CD8-positive, alpha-beta T cell (primary cell): ENCODE measurements at regions of chr20 and their contacts with region 1.

Region 1: GRCh38 chr20:36754656-36755222 is 8.8 kb upstream of the NDRG3 start:
- DNase-seq: peak in 7 of 9 experiments; percentile 10 to 74 (median 41)
- ATAC-seq: peak; percentile 94
- H3K4me3 ChIP-seq: no peak overlapping the region
- H3K4me3 Mint-ChIP-seq: no peak overlapping the region
- H3K27ac ChIP-seq: no peak overlapping the region
- H3K27ac Mint-ChIP-seq: no peak overlapping the region
- H3K4me1 ChIP-seq: no peaks in the 10 kb centered on the region
- H3K4me1 Mint-ChIP-seq: no peaks in the 10 kb centered on the region
- H3K27me3 ChIP-seq: no peaks in the 10 kb centered on the region
- H3K27me3 Mint-ChIP-seq: no peaks in the 10 kb centered on the region
- CTCF ChIP-seq: peak; percentile 61

Region 2: GRCh38 chr20:36267581-36268381 is 487.0 kb before region 1 on chr20:
- CTCF ChIA-PET with region 1: no interaction called
- POLR2A ChIA-PET with region 1: no interaction called
- intact Hi-C with region 1: no loop called
- DNase-seq: no peak
- ATAC-seq: no peak
- H3K4me3 ChIP-seq: no peak overlapping the region
- H3K4me3 Mint-ChIP-seq: no peak overlapping the region
- H3K27ac ChIP-seq: no peak overlapping the region
- H3K27ac Mint-ChIP-seq: no peak overlapping the region
- H3K4me1 ChIP-seq: no peaks in the 10 kb centered on the region
- H3K4me1 Mint-ChIP-seq: no peaks in the 10 kb centered on the region
- H3K27me3 ChIP-seq: no peaks in the 10 kb centered on the region
- H3K27me3 Mint-ChIP-seq: no peaks in the 10 kb centered on the region
- CTCF ChIP-seq: no peak

Region 3: GRCh38 chr20:36506253-36506652 is 248.5 kb before region 1 on chr20:
- CTCF ChIA-PET with region 1: interaction called, 5 read pairs
- POLR2A ChIA-PET with region 1: no interaction called
- intact Hi-C with region 1: loop called (anchors 1 kb)
- DNase-seq: peak in 2 of 9 experiments; percentile 36 to 59
- ATAC-seq: peak; percentile 80
- H3K4me3 ChIP-seq: no peak overlapping the region
- H3K4me3 Mint-ChIP-seq: no peak overlapping the region
- H3K27ac ChIP-seq: no peak overlapping the region
- H3K27ac Mint-ChIP-seq: no peak overlapping the region
- H3K4me1 ChIP-seq: no peaks in the 10 kb centered on the region
- H3K4me1 Mint-ChIP-seq: peaks cover 8% of the 10 kb centered on the region
- H3K27me3 ChIP-seq: no peaks in the 10 kb centered on the region
- H3K27me3 Mint-ChIP-seq: no peaks in the 10 kb centered on the region
- CTCF ChIP-seq: peak; percentile 51

Region 4: GRCh38 chr20:36613974-36614373 is 140.8 kb before region 1 on chr20:
- CTCF ChIA-PET with region 1: interaction called, 25 read pairs
- POLR2A ChIA-PET with region 1: no interaction called
- intact Hi-C with region 1: loop called (anchors 1 kb)
- DNase-seq: no peak
- ATAC-seq: no peak
- H3K4me3 ChIP-seq: no peak overlapping the region
- H3K4me3 Mint-ChIP-seq: no peak overlapping the region
- H3K27ac ChIP-seq: no peak overlapping the region
- H3K27ac Mint-ChIP-seq: peak overlapping the region; percentile 55
- H3K4me1 ChIP-seq: no peaks in the 10 kb centered on the region
- H3K4me1 Mint-ChIP-seq: peaks cover 16% of the 10 kb centered on the region
- H3K27me3 ChIP-seq: no peaks in the 10 kb centered on the region
- H3K27me3 Mint-ChIP-seq: no peaks in the 10 kb centered on the region
- CTCF ChIP-seq: no peak

Region 5: DNA sequence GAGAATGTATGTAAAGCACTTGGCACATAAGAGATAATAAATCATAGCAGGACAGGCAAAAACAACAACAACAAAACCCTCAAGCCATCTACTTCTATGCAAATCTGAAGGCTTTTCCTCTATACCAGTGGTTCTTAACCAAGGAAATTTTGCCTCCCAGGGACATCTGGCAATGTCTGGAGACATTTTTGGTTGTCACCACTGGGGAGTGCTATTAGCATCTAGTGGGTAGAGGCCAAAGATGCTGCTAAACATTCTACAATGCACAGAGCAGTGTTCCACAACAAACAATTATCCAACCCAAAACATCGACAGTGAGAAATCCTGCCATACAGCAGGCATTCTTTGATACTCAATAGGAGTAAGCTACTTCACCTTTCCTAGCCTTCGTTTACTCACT is 37.1 kb before region 1 on chr20:
- CTCF ChIA-PET with region 1: interaction called, 9 read pairs
- POLR2A ChIA-PET with region 1: no interaction called
- intact Hi-C with region 1: loop called in 1 of 2 experiments (anchors 1 kb)
- DNase-seq: peak in 2 of 9 experiments; percentile 26 to 44
- ATAC-seq: no peak
- H3K4me3 ChIP-seq: no peak overlapping the region
- H3K4me3 Mint-ChIP-seq: no peak overlapping the region
- H3K27ac ChIP-seq: no peak overlapping the region
- H3K27ac Mint-ChIP-seq: no peak overlapping the region
- H3K4me1 ChIP-seq: no peaks in the 10 kb centered on the region
- H3K4me1 Mint-ChIP-seq: no peaks in the 10 kb centered on the region
- H3K27me3 ChIP-seq: no peaks in the 10 kb centered on the region
- H3K27me3 Mint-ChIP-seq: no peaks in the 10 kb centered on the region
- CTCF ChIP-seq: no peak

Region 6: GRCh38 chr20:36886859-36887751 is 132.4 kb after region 1 on chr20:
- CTCF ChIA-PET with region 1: interaction called, 4 read pairs
- POLR2A ChIA-PET with region 1: no interaction called
- intact Hi-C with region 1: loop called in 1 of 2 experiments (anchors 1 kb)
- DNase-seq: peak; percentile 65 to 85 (median 80)
- ATAC-seq: peak; percentile 98
- H3K4me3 ChIP-seq: no peak overlapping the region
- H3K4me3 Mint-ChIP-seq: no peak overlapping the region
- H3K27ac ChIP-seq: peak overlapping the region in 1 of 2 experiments; percentile 50
- H3K27ac Mint-ChIP-seq: peak overlapping the region; percentile 79
- H3K4me1 ChIP-seq: peaks cover 4% of the 10 kb centered on the region
- H3K4me1 Mint-ChIP-seq: peaks cover 17% of the 10 kb centered on the region
- H3K27me3 ChIP-seq: no peaks in the 10 kb centered on the region
- H3K27me3 Mint-ChIP-seq: no peaks in the 10 kb centered on the region
- CTCF ChIP-seq: peak; percentile 87

Region 7: DNA sequence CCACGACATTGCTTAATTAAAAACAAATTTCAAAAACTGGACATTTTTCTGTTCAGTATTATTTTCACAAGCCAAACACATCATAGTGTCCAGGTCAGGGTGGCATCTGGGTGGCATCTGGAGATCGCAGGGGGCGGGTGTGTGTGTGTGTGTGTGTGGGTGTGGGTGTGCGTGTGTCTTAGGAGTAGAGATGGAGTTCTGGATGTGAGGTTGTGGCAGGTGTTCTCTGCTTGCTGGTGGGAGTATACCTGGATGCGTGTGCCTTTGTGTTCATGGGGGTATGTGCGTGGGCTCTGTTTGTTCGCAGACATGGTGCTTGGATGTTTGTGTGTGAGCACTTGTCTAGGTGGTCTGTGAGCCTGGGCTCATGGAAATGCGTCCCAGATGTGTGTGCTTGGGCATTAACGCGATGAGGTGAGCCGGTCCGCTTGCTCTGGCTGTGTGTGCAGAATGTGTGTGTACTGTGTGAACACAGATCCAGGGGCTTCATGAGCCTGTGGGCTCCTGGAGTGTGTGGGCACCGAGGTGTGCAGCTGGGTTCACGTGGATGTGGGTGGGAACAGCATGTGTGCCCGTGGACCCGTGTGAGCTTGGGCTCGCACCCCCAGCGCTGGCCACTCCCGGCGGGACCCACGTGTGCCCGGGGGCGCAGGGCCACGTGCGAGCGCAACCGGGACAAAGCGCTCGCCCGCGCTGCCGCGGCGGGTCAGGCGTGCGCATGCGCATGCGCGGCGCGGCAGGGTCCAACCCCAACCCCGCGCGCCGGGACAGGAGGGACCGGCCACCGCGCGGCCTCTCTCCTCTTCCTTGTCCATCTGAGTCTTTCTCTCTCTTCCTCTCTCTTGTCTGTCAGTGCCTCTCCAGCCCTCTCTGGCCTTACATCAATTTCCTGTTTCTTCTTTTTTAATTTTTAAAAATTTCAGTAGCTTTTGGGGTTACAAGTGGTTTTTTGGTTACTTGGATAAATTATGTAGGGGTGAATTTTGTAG is 651.6 kb after region 1 on chr20:
- CTCF ChIA-PET with region 1: no interaction called
- POLR2A ChIA-PET with region 1: no interaction called
- intact Hi-C with region 1: no loop called
- DNase-seq: peak in 3 of 9 experiments; percentile 18 to 52 (median 48)
- ATAC-seq: no peak
- H3K4me3 ChIP-seq: peak overlapping the region; percentile 18 to 51
- H3K4me3 Mint-ChIP-seq: peak overlapping the region; percentile 73
- H3K27ac ChIP-seq: no peak overlapping the region
- H3K27ac Mint-ChIP-seq: no peak overlapping the region
- H3K4me1 ChIP-seq: peaks cover 10% of the 10 kb centered on the region
- H3K4me1 Mint-ChIP-seq: peaks cover 15% of the 10 kb centered on the region
- H3K27me3 ChIP-seq: peaks cover 0 to 15% of the 10 kb centered on the region in 2 experiments
- H3K27me3 Mint-ChIP-seq: peaks cover 31% of the 10 kb centered on the region
- CTCF ChIP-seq: no peak